ENCODE measurements at regions of chr1 and their contacts with region 1.

Region 1: GRCh38 chr1:166307261-166308188 is 140.7 kb upstream of the FAM78B start:
- DNase-seq: peak; percentile 67
- ATAC-seq: peak; percentile 96

Region 2: GRCh38 chr1:166166695-166167571 is 140.6 kb before region 1 on chr1 and contains the start of gene FAM78B:
- intact Hi-C with region 1: loop called (anchors 2 kb)
- DNase-seq: peak; percentile 88
- ATAC-seq: peak; percentile 96
- total RNA-seq, gene FAM78B: 3.4 TPM

Region 3: GRCh38 chr1:166233750-166234366 is 73.7 kb before region 1 on chr1:
- intact Hi-C with region 1: no loop called
- DNase-seq: no peak
- ATAC-seq: no peak

Region 4: GRCh38 chr1:166379447-166379846 is 71.9 kb after region 1 on chr1:
- intact Hi-C with region 1: loop called (anchors 5 kb)
- DNase-seq: no peak
- ATAC-seq: peak; percentile 89

Measured in Right ventricle myocardium inferior (tissue), 1 donor.